HEK293 (cell line): ENCODE measurements at regions of chrX and their contacts with region 1.

Region 1: GRCh38 chrX:87572911-87573310 is 55.3 kb downstream of the KLHL4 start:
- H3K4me3 ChIP-seq: no peak overlapping the region
- H3K27ac ChIP-seq: no peak overlapping the region
- H3K4me1 ChIP-seq: no peaks in the 10 kb centered on the region
- CTCF ChIP-seq: no peak

Region 2: DNA sequence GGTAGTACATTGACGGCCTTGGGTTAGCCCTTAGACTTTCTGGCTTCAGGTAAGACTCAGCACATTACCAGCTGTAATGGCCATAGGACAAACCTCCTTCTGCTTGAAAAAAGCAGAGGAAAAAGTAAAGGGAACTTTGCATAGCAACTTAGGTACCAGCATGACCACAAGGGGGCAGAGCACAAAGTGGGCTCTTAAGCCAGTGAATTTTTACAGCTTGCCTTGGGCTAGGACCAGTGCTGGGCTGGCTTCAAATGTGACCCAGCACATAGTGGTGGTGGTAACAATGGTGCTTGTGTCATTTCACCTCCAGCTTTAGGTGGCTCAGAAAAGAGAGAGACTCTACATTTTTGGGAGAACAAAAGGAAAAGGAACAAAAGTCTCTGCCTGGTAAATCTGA is 10.8 kb after region 1 on chrX:
- CTCF ChIA-PET with region 1: interaction called, 16 read pairs
- POLR2A ChIA-PET with region 1: no interaction called
- H3K4me3 ChIP-seq: no peak overlapping the region
- H3K27ac ChIP-seq: no peak overlapping the region
- H3K4me1 ChIP-seq: no peaks in the 10 kb centered on the region
- CTCF ChIP-seq: no peak